ENCODE measurements at regions of chr3 and their contacts with region 1.

Region 1: DNA sequence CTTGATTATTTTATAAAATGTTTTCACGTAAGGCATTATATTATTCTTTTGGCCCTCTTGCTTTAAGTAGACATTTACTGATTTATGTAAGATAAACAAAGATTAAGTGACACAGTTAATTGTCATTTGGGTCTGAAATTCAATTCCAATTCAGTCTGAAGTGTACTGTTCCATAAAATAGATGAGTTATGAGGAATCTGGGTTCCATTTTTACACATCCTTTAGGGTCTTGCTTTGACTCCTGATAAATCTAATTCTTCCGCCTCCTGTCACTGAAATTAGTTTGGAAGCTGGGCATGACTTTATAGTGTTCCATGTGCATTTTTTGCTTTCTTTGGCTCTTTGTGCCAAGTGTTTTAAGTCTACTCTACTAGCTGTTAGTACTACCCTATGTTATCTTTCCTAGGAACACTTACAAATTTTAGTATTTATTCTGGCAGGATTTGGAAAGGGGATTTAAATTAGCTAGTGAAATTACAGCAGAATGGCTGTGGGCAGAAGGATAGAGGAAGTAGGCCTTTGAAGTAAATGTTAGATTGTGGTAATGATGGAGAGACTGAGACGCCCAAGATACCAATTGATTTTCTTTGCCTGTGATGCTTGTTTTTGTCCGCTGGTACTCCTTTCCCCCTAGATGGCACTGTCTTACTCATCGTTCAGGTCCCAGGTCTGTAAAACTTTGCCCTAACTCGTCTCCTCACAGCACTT is 14.3 kb downstream of the ARL8B start:
- DNase-seq: peak in 1 of 2 experiments; percentile 37
- H3K4me3 ChIP-seq: no peak overlapping the region
- H3K4me3 Mint-ChIP-seq: no peak overlapping the region
- H3K27ac Mint-ChIP-seq: no peak overlapping the region
- H3K4me1 ChIP-seq: peaks cover 19% of the 10 kb centered on the region
- H3K4me1 Mint-ChIP-seq: peaks cover 18% of the 10 kb centered on the region
- H3K27me3 ChIP-seq: no peaks in the 10 kb centered on the region
- H3K27me3 Mint-ChIP-seq: no peaks in the 10 kb centered on the region
- CTCF ChIP-seq: peak; percentile 18 to 62

Region 2: DNA sequence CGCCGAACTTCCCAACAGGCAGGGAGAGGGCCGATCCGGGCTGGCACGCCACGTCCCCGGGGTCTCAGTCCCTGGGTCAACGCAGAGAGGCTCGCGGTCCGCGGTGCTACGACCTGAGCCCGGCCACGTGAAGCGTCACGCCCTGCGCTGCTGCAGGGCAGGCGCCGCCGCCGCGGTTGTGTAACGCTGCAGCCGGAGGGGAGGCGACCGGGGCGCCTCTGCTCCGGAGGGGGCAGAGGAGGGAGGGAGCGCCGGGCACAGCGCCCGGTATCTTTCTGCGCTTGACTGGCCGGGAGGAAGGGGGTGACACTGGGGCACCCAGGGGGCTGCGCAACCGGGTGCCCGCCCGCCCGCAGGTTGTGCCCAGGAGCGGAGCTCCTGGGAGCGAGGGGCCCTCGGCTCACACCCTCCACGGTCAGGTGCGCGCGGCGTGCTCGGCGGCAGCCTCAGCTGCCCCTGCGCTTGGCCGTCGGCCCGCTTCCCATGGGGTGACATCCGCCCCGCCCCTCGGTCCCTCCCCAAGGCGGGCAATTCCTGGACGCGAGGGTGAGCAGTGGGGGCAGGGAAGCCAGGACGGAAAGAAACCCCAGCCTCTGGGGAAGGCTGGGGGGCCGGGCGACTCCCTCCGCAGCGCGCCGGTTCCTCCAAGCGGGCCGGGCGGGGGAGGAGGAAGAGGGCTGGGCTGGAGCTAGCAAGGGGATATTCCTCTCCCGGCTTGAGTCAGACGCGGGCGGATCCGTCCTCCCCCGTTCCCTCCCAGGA is 158.0 kb before region 1 on chr3:
- CTCF ChIA-PET with region 1: no interaction called
- POLR2A ChIA-PET with region 1: no interaction called
- intact Hi-C with region 1: no loop called
- DNase-seq: peak; percentile 91 to 93
- H3K4me3 ChIP-seq: peak overlapping the region; percentile 70
- H3K4me3 Mint-ChIP-seq: peak overlapping the region; percentile 89
- H3K27ac Mint-ChIP-seq: peak overlapping the region; percentile 67
- H3K4me1 ChIP-seq: peaks cover 18% of the 10 kb centered on the region
- H3K4me1 Mint-ChIP-seq: peaks cover 17% of the 10 kb centered on the region
- H3K27me3 ChIP-seq: no peaks in the 10 kb centered on the region
- H3K27me3 Mint-ChIP-seq: no peaks in the 10 kb centered on the region
- CTCF ChIP-seq: no peak

Region 3: DNA sequence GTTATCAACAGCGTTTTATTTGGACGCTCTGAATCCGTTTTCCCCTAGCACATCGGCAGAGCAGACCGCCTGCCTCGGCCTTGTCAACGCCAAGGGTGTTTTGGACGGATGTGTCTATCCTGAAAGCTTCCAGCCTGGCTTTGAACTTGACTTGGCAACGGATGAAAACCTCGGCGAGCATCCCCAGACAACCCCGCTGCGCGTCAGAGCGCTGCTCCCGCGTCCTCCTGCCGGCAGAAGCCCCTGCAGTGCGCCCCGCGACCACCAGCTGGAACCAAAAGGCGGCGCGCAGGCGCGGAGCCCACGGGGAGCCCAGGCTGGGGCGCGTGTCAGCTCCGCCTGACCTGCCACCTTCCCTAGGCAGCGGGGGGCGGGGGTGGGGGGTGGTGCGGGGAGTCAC is 40.5 kb before region 1 on chr3:
- CTCF ChIA-PET with region 1: no interaction called
- POLR2A ChIA-PET with region 1: no interaction called
- intact Hi-C with region 1: no loop called
- DNase-seq: no peak
- H3K4me3 ChIP-seq: no peak overlapping the region
- H3K4me3 Mint-ChIP-seq: no peak overlapping the region
- H3K27ac Mint-ChIP-seq: no peak overlapping the region
- H3K4me1 ChIP-seq: peaks cover 10% of the 10 kb centered on the region
- H3K4me1 Mint-ChIP-seq: peaks cover 2% of the 10 kb centered on the region
- H3K27me3 ChIP-seq: no peaks in the 10 kb centered on the region; the same call in 1 of the 2 replicates
- H3K27me3 Mint-ChIP-seq: no peaks in the 10 kb centered on the region
- CTCF ChIP-seq: no peak

Region 4: DNA sequence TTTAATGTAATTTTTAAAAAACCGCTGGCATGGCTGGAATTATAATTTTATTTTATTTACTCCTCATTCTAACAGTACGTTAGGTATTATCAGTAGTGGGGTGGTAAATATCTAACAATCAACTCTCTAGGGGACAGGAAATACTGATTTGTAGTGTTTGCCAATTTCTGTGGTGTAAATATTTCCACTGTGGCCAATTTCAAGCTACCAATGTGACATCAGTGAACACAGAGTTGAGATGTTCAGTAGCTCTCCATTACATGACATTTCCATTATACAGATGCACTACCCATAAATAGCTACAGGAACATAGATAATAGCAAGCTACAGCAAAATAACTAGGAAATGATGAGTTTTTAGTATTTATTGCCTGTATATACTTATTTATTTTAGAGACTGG is 24.3 kb before region 1 on chr3:
- CTCF ChIA-PET with region 1: no interaction called
- POLR2A ChIA-PET with region 1: no interaction called
- intact Hi-C with region 1: no loop called
- DNase-seq: no peak
- H3K4me3 ChIP-seq: no peak overlapping the region
- H3K4me3 Mint-ChIP-seq: no peak overlapping the region
- H3K27ac Mint-ChIP-seq: no peak overlapping the region
- H3K4me1 ChIP-seq: peaks cover 19% of the 10 kb centered on the region
- H3K4me1 Mint-ChIP-seq: peaks cover 6% of the 10 kb centered on the region
- H3K27me3 ChIP-seq: no peaks in the 10 kb centered on the region
- H3K27me3 Mint-ChIP-seq: no peaks in the 10 kb centered on the region
- CTCF ChIP-seq: no peak

Region 5: GRCh38 chr3:5122030-5122740 is 14.2 kb before region 1 on chr3 and contains the start of gene ARL8B:
- CTCF ChIA-PET with region 1: interaction called, 5 read pairs
- POLR2A ChIA-PET with region 1: interaction called, 5 read pairs
- intact Hi-C with region 1: loop called (anchors 2 kb)
- DNase-seq: peak; percentile 87 to 94
- H3K4me3 ChIP-seq: peak within 1 kb of the TSS; percentile 99
- H3K4me3 Mint-ChIP-seq: peak within 1 kb of the TSS; percentile 84
- H3K27ac Mint-ChIP-seq: peak within 1 kb of the TSS; percentile 84
- H3K4me1 ChIP-seq: peaks cover 3% of the 10 kb centered on the region; the same call in 1 of the 2 replicates
- H3K4me1 Mint-ChIP-seq: peaks cover 14% of the 10 kb centered on the region
- H3K27me3 ChIP-seq: no peaks in the 10 kb centered on the region
- H3K27me3 Mint-ChIP-seq: no peaks in the 10 kb centered on the region
- CTCF ChIP-seq: peak; percentile 83 to 94
- total RNA-seq, gene ARL8B: 56.1 and 65.0 TPM in 2 replicates

Measured in Caco-2 (cell line).